RWPE1 (cell line): ENCODE measurements at regions of chr5 and their contacts with region 1.

Region 1: GRCh38 chr5:139968547-139969261 is 74.4 kb downstream of the NRG2 start:
- DNase-seq: peak; percentile 94
- H3K27ac ChIP-seq: no peak overlapping the region
- CTCF ChIP-seq: peak; percentile 100

Region 2: GRCh38 chr5:139787568-139788293 is 181.0 kb before region 1 on chr5:
- CTCF ChIA-PET with region 1: interaction called, 323 read pairs
- POLR2A ChIA-PET with region 1: no interaction called
- DNase-seq: peak; percentile 97
- H3K27ac ChIP-seq: peak overlapping the region; percentile 57
- CTCF ChIP-seq: peak; percentile 96

Region 3: DNA sequence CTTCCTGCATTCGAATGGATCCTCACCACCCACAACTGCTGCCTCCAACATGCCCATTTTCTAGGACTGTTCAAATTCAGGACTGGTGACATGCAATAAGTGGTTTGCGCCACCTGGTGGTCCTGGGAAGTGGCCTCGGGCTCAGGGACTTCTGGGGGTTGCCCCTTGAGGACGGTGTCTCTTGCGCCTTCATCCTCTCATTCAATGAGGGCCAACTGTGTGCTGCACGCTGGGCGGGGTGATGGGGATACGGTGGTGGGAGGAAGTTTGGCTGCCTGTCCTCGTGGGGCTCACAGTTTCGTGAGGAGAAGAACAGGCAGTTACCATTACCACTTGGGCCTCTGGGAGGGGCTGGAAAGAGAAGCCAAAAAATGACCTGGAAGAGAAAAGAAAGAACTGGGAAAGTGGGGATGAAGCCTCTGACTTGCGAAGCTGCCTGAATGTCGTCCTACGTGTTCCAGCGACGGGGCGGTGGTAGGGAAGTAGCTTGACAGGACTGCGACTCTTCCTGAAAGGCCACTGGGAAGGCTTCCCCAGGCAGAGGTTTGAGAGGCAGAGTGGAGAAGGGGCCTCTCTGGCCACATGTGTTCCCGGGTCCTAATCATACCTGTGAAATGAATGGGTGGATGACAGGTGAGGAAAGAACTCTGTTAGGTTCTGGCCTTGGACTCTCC is 124.1 kb before region 1 on chr5:
- CTCF ChIA-PET with region 1: interaction called, 37 read pairs
- POLR2A ChIA-PET with region 1: no interaction called
- DNase-seq: peak; percentile 71
- H3K27ac ChIP-seq: no peak overlapping the region
- CTCF ChIP-seq: peak; percentile 77

Region 4: GRCh38 chr5:139872052-139872766 is 96.5 kb before region 1 on chr5:
- CTCF ChIA-PET with region 1: interaction called, 14 read pairs
- POLR2A ChIA-PET with region 1: no interaction called
- DNase-seq: no peak
- H3K27ac ChIP-seq: peak overlapping the region; percentile 33
- CTCF ChIP-seq: no peak

Region 5: GRCh38 chr5:139942243-139942642 is 26.5 kb before region 1 on chr5:
- CTCF ChIA-PET with region 1: interaction called, 12 read pairs
- POLR2A ChIA-PET with region 1: no interaction called
- DNase-seq: no peak
- H3K27ac ChIP-seq: no peak overlapping the region
- CTCF ChIP-seq: no peak

Region 6: GRCh38 chr5:140042643-140043500 is 74.2 kb after region 1 on chr5 and contains the start of gene NRG2:
- CTCF ChIA-PET with region 1: interaction called, 26 read pairs
- POLR2A ChIA-PET with region 1: no interaction called
- DNase-seq: peak; percentile 69
- H3K27ac ChIP-seq: peak within 1 kb of the TSS; percentile 74
- CTCF ChIP-seq: peak; percentile 63